ENCODE measurements at regions of chr9 and their contacts with region 1.

Region 1: DNA sequence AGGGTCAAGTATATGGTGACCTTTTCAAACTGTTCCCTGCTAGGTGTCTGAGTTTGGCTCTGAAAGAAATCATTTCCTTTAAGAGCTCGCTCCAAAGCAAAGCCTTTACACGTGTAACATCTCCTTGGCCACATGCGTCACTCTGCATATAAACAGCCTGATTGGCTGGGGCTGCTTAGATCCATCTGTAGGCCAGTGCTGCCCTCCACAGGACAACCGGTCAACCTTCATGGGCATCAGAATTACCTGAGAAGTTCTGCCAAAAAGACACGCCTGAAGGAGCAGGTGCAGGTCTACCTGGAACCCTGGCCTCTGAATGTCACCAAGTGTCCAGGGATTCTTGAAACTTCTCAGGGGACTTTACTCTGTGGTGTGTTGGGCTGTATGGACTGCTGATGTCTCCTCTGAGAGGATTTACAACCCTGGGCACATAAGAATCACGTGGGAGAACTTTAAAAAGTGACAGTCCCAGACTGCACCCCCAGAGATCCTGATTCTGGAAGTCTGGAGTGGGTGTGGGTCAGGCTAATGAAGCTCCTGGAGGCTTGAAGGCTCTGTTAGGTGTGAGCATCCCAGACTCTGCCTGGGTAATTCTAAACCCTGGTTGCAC is 497.6 kb downstream of the GADD45G start:
- DNase-seq: peak; percentile 53 to 70
- H3K4me3 ChIP-seq: no peak overlapping the region
- H3K27ac ChIP-seq: no peak overlapping the region
- H3K4me1 ChIP-seq: no peaks in the 10 kb centered on the region
- H3K27me3 ChIP-seq: no peaks in the 10 kb centered on the region; a peak in 2 of 7 replicates
- CTCF ChIP-seq: peak; percentile 76 to 92 (median 86)
- EP300 ChIP-seq: no peak
- POLR2A ChIP-seq: no peak
- RAD21 ChIP-seq: peak; percentile 97 to 98

Region 2: DNA sequence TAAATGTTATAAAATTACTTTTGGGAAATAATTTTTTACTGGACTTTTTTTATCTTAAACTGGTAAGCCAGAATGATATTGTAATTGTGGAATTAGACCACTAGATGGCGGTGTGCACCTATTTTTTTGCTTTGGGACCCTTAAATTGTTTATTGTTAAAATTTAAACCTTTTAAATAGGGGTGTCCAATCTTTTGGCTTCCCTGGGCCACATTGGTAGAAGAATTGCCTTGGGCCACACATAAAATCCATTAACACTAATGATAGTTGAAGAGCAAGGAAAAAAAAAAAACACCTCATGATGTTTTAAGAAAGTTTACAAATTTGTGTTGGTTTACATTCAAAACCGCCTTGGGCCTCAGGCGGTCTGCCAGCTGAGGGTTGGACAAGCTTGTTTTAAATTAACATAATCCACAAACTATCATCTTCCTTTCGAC is 526.0 kb before region 1 on chr9:
- CTCF ChIA-PET with region 1: interaction called, 14 read pairs
- POLR2A ChIA-PET with region 1: no interaction called
- DNase-seq: no peak
- H3K4me3 ChIP-seq: no peak overlapping the region
- H3K27ac ChIP-seq: no peak overlapping the region
- H3K4me1 ChIP-seq: no peaks in the 10 kb centered on the region
- H3K27me3 ChIP-seq: no peaks in the 10 kb centered on the region
- CTCF ChIP-seq: peak in 2 of 3 experiments; percentile 32 to 43; a peak in 2 of 4 replicates
- EP300 ChIP-seq: no peak
- POLR2A ChIP-seq: no peak
- RAD21 ChIP-seq: peak; percentile 56 to 65

Region 3: GRCh38 chr9:90112788-90113187 is 10.4 kb after region 1 on chr9:
- CTCF ChIA-PET with region 1: interaction called, 11 read pairs
- POLR2A ChIA-PET with region 1: no interaction called
- DNase-seq: no peak
- H3K4me3 ChIP-seq: no peak overlapping the region
- H3K27ac ChIP-seq: no peak overlapping the region
- H3K4me1 ChIP-seq: no peaks in the 10 kb centered on the region
- H3K27me3 ChIP-seq: no peaks in the 10 kb centered on the region
- CTCF ChIP-seq: no peak
- EP300 ChIP-seq: no peak
- POLR2A ChIP-seq: no peak
- RAD21 ChIP-seq: no peak

Region 4: GRCh38 chr9:90219548-90220118 is 117.2 kb after region 1 on chr9:
- CTCF ChIA-PET with region 1: no interaction called
- POLR2A ChIA-PET with region 1: no interaction called
- DNase-seq: peak; percentile 5 to 83
- H3K4me3 ChIP-seq: peak overlapping the region; percentile 30 to 58 (median 40); a peak in 7 of 8 replicates
- H3K27ac ChIP-seq: no peak overlapping the region
- H3K4me1 ChIP-seq: no peaks in the 10 kb centered on the region; a peak in 1 of 7 replicates
- H3K27me3 ChIP-seq: no peaks in the 10 kb centered on the region
- CTCF ChIP-seq: peak; percentile 62 to 87 (median 83)
- EP300 ChIP-seq: no peak
- POLR2A ChIP-seq: no peak
- RAD21 ChIP-seq: peak; percentile 82 to 87